ENCODE measurements at regions of chr3 and their contacts with region 1.

Region 1: GRCh38 chr3:157201648-157202278 is 41.8 kb upstream of the CCNL1 start:
- DNase-seq: peak; percentile 63
- H3K4me3 ChIP-seq: no peak overlapping the region
- H3K27ac ChIP-seq: no peak overlapping the region
- H3K4me1 ChIP-seq: peaks cover 14% of the 10 kb centered on the region
- H3K27me3 ChIP-seq: no peaks in the 10 kb centered on the region
- CTCF ChIP-seq: peak; percentile 40 to 41
- POLR2A ChIP-seq: no peak

Region 2: GRCh38 chr3:156151824-156152428 is 1049.8 kb before region 1 on chr3:
- CTCF ChIA-PET with region 1: interaction called, 26 read pairs
- POLR2A ChIA-PET with region 1: no interaction called
- dilution Hi-C with region 1: no loop called
- intact Hi-C with region 1: no loop called
- DNase-seq: peak; percentile 75
- H3K4me3 ChIP-seq: no peak overlapping the region
- H3K27ac ChIP-seq: no peak overlapping the region
- H3K4me1 ChIP-seq: peaks cover 19% of the 10 kb centered on the region
- H3K27me3 ChIP-seq: peaks cover 0 to 1% of the 10 kb centered on the region in 2 experiments
- CTCF ChIP-seq: peak; percentile 77 to 81
- POLR2A ChIP-seq: no peak

Region 3: GRCh38 chr3:157239082-157239704 is 37.4 kb after region 1 on chr3:
- CTCF ChIA-PET with region 1: interaction called, 12 read pairs
- POLR2A ChIA-PET with region 1: no interaction called
- dilution Hi-C with region 1: no loop called
- intact Hi-C with region 1: loop called (anchors 1 kb)
- DNase-seq: peak; percentile 57
- H3K4me3 ChIP-seq: no peak overlapping the region
- H3K27ac ChIP-seq: no peak overlapping the region
- H3K4me1 ChIP-seq: peaks cover 15% of the 10 kb centered on the region
- H3K27me3 ChIP-seq: no peaks in the 10 kb centered on the region
- CTCF ChIP-seq: peak; percentile 71 to 79
- POLR2A ChIP-seq: no peak

Region 4: DNA sequence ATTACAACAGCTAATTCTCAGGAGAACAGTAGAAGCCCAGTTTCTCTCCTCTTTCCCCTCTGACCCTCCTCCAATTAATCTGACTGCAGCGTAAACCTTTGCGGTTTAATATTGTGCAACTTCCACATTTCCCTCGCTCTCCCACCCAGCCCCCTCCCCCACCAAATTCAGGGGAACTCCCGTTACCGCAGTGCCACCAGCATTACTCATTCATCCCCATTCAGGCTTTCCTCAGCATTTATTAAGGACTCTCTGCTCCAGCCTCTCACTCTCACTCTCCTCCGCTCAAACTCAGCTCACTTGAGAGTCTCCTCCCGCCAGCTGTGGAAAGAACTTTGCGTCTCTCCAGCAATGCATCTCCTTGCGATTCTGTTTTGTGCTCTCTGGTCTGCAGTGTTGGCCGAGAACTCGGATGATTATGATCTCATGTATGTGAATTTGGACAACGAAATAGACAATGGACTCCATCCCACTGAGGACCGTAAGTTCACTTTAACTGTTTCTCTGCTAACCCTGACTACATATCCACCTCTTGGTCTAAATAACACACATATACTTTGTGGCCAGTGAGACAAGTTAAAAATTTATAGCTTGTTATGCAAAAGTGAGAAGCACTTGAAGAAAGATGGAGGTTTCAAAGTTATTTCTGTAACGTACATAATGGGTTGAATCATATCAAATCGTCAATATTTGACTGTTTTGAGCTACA is 235.0 kb after region 1 on chr3 and contains the start of gene PTX3:
- CTCF ChIA-PET with region 1: interaction called, 24 read pairs
- POLR2A ChIA-PET with region 1: interaction called, 4 read pairs
- dilution Hi-C with region 1: no loop called
- intact Hi-C with region 1: loop called (anchors 1 kb)
- DNase-seq: peak; percentile 85
- H3K4me3 ChIP-seq: peak within 1 kb of the TSS; percentile 68 to 93 (median 79)
- H3K27ac ChIP-seq: peak within 1 kb of the TSS; percentile 74
- H3K4me1 ChIP-seq: peaks cover 31% of the 10 kb centered on the region
- H3K27me3 ChIP-seq: no peaks in the 10 kb centered on the region
- CTCF ChIP-seq: no peak
- POLR2A ChIP-seq: peak; percentile 89
- total RNA-seq, gene PTX3: 149 and 172 TPM in 2 replicates

Region 5: GRCh38 chr3:157493627-157494550 is 292.1 kb after region 1 on chr3:
- CTCF ChIA-PET with region 1: interaction called, 97 read pairs
- POLR2A ChIA-PET with region 1: no interaction called
- dilution Hi-C with region 1: no loop called
- intact Hi-C with region 1: loop called (anchors 1 kb)
- DNase-seq: peak; percentile 81
- H3K4me3 ChIP-seq: no peak overlapping the region
- H3K27ac ChIP-seq: peak overlapping the region; percentile 8
- H3K4me1 ChIP-seq: no peaks in the 10 kb centered on the region
- H3K27me3 ChIP-seq: no peaks in the 10 kb centered on the region
- CTCF ChIP-seq: peak; percentile 28 to 31
- POLR2A ChIP-seq: no peak

Region 6: DNA sequence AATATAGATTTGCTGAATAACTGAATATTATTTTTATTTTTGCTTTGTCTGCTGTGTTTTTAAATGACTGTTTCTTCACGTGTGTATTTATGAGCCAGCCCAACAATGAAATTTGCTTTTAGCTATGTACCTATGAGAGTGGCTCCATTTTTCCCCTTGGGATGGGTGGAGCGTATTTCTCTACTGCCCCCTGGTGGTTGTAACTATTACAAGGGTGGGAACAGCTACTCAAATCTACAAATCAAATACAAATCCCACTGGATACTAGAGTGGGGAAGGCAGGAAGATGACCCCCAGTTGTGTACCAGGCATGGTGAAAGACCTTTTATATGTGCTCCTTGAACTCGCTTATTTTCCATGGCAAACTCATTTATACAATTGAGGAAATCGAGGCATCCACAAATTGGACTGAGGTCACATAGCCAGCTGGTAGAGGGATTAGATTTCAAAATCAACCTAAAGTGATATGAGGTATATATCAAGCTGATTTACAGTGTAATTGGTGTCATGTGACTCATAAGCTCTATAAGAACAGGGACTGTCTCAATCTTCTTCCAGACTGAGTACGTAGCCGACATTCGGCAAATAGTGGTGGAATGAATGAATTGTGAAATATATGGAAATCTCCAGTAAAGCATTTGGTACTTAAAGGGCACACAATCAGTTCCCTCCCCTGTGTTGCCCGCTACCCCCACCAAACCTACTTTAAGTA is 371.0 kb after region 1 on chr3:
- CTCF ChIA-PET with region 1: interaction called, 101 read pairs
- POLR2A ChIA-PET with region 1: no interaction called
- dilution Hi-C with region 1: no loop called
- intact Hi-C with region 1: loop called (anchors 1 kb)
- DNase-seq: peak; percentile 83
- H3K4me3 ChIP-seq: no peak overlapping the region
- H3K27ac ChIP-seq: no peak overlapping the region
- H3K4me1 ChIP-seq: no peaks in the 10 kb centered on the region
- H3K27me3 ChIP-seq: no peaks in the 10 kb centered on the region
- CTCF ChIP-seq: peak; percentile 71 to 75
- POLR2A ChIP-seq: no peak

Measured in endothelial cell of umbilical vein (primary cell).